Tibial artery (tissue), 4 donors: ENCODE measurements at regions of chr10 and their contacts with region 1.

Region 1: GRCh38 chr10:117074621-117075020 is 63.4 kb downstream of the VAX1 start:
- DNase-seq: no peak
- H3K4me3 ChIP-seq: no peak overlapping the region
- H3K27ac ChIP-seq: no peak overlapping the region
- H3K4me1 ChIP-seq: no peaks in the 10 kb centered on the region
- H3K27me3 ChIP-seq: peaks cover 0 to 6% of the 10 kb centered on the region in 2 donors
- CTCF ChIP-seq: no peak

Region 2: DNA sequence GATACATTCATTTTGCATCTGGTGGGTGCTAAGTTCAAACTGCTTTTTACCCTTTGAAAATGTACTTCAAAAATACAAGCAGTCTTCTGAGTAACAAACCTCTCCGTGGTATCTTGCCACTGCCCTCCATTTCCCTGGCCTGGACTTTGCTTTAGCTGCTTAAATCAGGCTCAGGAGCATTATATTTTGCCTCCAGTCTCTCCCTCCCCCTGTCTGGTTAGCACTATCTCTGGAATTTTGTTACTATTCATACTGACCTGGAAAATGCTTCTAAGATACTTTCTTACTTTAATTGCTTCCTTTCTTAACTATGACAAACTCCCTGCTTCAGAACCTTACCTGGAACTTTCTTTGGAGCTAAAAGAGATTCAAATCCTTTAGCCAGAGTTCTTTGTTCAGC is 1171.4 kb before region 1 on chr10:
- intact Hi-C with region 1: loop called (anchors 5 kb)
- DNase-seq: no peak
- H3K4me3 ChIP-seq: no peak overlapping the region
- H3K27ac ChIP-seq: no peak overlapping the region
- H3K4me1 ChIP-seq: no peaks in the 10 kb centered on the region
- H3K27me3 ChIP-seq: no peaks in the 10 kb centered on the region
- CTCF ChIP-seq: no peak

Region 3: DNA sequence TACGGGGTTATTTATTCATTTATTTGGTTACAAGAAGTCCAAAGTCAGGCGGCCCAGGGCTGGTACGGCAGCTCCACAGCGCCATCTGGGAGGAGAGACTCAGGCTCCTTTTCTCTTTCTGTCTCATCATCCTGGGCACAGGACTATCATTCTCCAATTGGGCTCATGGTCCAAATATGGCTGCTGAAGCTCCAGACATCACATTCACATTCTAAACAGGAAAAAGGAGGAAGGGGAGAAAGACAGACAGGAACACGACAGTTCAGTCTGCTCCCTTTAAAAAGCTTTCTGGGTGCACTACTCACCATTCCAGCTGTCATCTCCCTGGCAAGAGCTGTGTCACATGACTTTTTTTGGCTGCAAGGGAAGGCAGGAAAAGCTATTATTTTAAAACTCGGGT is 375.0 kb after region 1 on chr10:
- intact Hi-C with region 1: no loop called
- DNase-seq: no peak
- H3K4me3 ChIP-seq: no peak overlapping the region
- H3K27ac ChIP-seq: no peak overlapping the region
- H3K4me1 ChIP-seq: peaks cover 0 to 21% (median 5%) of the 10 kb centered on the region in 4 donors
- H3K27me3 ChIP-seq: no peaks in the 10 kb centered on the region
- CTCF ChIP-seq: no peak